PC-9 (cell line): ENCODE measurements at regions of chr14 and their contacts with region 1.

Region 1: DNA sequence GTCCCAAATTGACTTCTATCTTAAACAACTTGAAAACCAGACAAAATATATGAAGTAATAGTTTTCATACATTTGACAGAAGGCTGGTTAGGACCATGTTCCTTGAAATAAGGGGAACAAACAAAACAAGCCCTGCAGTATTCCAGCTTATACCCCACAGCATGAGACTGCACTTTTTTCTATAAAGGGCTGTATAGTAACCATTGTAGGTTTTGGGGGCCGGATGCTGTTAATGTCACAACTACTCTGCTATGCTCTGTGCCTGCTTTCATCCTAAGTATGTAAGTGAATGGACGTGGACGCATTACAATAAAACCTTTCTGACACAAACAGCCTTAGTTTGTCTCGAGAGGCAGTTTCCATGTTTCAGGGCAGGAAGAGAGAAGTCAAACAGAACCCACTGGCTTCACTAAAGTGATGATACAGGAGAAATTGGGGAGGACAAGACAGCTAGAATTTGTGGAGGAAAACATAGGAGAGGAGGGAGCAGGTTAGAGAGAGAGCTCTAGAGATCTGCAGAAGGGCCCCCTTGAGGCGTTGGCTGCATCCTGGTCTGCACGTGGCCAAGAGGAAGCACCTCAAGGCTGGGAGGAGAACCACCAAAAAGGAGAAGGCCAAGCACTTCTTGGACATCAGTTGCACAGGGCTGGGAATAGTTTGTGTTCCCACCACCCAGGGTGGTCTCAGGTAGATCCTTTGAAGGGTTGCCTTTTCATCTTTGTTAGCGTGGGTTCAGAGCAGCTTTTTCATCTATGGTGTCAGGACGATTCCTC is 63.7 kb downstream of the TRAF3 start:
- DNase-seq: no peak
- H3K4me3 ChIP-seq: no peak overlapping the region
- H3K27ac ChIP-seq: no peak overlapping the region
- H3K4me1 ChIP-seq: no peaks in the 10 kb centered on the region
- H3K27me3 ChIP-seq: no peaks in the 10 kb centered on the region
- CTCF ChIP-seq: no peak

Region 2: DNA sequence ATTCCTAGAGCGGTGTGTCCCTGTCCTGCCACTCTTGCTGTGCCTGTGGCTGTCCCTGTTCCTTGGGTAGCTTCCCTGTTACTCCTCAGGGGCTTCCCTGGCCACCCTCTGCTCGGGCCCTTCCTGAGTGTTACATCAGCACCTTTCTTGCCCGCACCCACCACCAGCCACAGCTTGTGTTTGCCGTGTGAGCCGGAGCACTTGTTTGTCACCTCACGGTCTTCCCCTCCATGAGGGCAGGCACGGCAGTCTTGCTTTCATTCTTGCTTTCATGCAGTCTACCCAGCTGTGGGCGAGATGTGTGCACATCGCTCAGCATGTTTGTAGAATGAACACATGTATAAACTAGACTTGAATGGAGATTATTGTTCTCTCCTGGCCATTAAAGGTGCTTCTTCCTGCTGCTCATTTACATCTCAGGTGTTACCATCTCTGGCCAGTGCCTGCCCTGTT is 21.7 kb before region 1 on chr14:
- CTCF ChIA-PET with region 1: no interaction called
- POLR2A ChIA-PET with region 1: interaction called, 21 read pairs
- intact Hi-C with region 1: no loop called
- DNase-seq: no peak
- H3K4me3 ChIP-seq: no peak overlapping the region
- H3K27ac ChIP-seq: no peak overlapping the region
- H3K4me1 ChIP-seq: no peaks in the 10 kb centered on the region
- H3K27me3 ChIP-seq: no peaks in the 10 kb centered on the region
- CTCF ChIP-seq: no peak